Activated T-helper 2 cell treated with anti-CD3 and anti-CD28 coated beads, Interferon-gamma antibody, Interleukin-2, Interleukin-4, amounts not matched to agents 10 μg/mL and 5 μg/mL and 100 μg/mL, durations not matched to agents 14 hours and 24 hours and 36 hours (primary cell): ENCODE measurements at regions of chr9 and their contacts with region 1.

Region 1: DNA sequence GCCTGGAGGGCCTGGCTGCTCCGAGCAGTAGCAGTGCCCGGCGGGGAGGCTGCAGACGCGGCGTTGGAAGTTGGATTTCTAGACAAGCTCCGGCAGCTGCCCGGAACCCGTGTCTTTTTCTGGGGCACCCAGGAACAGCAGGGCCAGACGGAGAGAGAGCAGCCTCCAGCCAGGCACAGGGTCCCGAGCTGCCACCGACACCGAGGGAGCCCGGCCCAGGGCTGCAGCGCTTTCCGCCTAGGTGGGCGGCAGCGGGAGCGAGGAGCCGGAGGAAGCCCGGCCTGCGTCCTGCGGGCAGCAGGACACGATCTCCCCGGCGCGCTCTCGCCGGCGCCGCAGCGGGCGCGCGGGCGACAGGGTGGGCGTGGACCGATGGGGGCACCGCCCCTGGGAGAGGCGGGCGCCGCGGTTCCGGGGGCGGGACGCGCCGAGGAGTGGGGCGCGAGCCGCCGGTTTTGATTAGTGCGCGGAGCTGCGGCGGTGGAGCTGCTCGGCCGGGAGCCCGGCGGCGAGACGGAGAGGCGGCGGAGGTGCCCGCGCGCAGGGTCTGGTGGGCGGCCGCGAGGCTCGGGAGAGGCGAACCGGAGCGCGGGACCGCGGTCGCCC is at the start of gene UGCG:
- DNase-seq: peak; percentile 85
- H3K4me3 Mint-ChIP-seq: peak within 1 kb of the TSS; percentile 84
- H3K27ac Mint-ChIP-seq: peak within 1 kb of the TSS; percentile 83
- H3K4me1 Mint-ChIP-seq: peaks cover 9% of the 10 kb centered on the region
- H3K27me3 Mint-ChIP-seq: peaks cover 3% of the 10 kb centered on the region
- total RNA-seq, gene UGCG: 14.4 and 16.6 TPM in 2 replicates

Region 2: DNA sequence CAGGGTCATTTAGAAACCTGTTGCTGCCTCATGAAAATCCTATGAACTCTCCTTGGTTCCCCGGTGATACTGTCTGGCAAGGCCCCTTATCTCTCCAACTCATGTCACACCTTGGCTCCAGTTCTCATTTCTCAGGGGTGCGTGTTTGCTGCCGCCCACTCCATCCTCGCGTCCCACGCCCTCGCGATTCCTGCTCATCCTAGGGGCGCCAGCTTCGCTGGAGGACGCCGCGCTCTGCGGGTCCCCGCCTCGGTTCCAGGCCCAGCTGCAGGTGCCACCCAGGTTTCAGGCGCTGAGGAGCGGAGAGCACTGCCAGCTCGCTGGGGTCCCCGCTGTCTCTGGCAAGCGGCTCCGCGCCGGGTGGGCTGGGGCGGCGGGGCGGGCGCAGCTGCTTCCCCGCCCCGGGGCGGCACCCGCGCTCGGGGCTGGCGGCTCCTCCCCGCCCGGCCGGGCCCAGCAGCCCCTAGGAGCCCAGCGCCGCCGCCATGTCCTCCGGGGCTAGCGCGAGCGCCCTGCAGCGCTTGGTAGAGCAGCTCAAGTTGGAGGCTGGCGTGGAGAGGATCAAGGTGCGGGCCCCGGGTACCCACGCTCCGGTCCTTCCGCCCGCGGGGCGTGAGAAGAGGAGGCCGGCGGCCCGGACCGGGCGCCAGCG is 235.2 kb before region 1 on chr9 and contains the start of gene GNG10:
- intact Hi-C with region 1: loop called (anchors 5 kb)
- DNase-seq: peak; percentile 62
- H3K4me3 Mint-ChIP-seq: peak within 1 kb of the TSS; percentile 87
- H3K27ac Mint-ChIP-seq: peak within 1 kb of the TSS; percentile 83
- H3K4me1 Mint-ChIP-seq: peaks cover 19% of the 10 kb centered on the region
- H3K27me3 Mint-ChIP-seq: no peaks in the 10 kb centered on the region
- total RNA-seq, gene GNG10: 30.7 and 30.9 TPM in 2 replicates

Region 3: GRCh38 chr9:111870774-111871498 is 25.5 kb before region 1 on chr9:
- intact Hi-C with region 1: loop called (anchors 2 kb)
- DNase-seq: peak; percentile 11
- H3K4me3 Mint-ChIP-seq: no peak overlapping the region
- H3K27ac Mint-ChIP-seq: no peak overlapping the region
- H3K4me1 Mint-ChIP-seq: peaks cover 18% of the 10 kb centered on the region
- H3K27me3 Mint-ChIP-seq: peaks cover 50% of the 10 kb centered on the region

Region 4: GRCh38 chr9:111945216-111945615 is 48.8 kb after region 1 on chr9:
- intact Hi-C with region 1: loop called (anchors 5 kb)
- DNase-seq: no peak
- H3K4me3 Mint-ChIP-seq: no peak overlapping the region
- H3K27ac Mint-ChIP-seq: no peak overlapping the region
- H3K4me1 Mint-ChIP-seq: peaks cover 14% of the 10 kb centered on the region
- H3K27me3 Mint-ChIP-seq: peaks cover 7% of the 10 kb centered on the region

Region 5: DNA sequence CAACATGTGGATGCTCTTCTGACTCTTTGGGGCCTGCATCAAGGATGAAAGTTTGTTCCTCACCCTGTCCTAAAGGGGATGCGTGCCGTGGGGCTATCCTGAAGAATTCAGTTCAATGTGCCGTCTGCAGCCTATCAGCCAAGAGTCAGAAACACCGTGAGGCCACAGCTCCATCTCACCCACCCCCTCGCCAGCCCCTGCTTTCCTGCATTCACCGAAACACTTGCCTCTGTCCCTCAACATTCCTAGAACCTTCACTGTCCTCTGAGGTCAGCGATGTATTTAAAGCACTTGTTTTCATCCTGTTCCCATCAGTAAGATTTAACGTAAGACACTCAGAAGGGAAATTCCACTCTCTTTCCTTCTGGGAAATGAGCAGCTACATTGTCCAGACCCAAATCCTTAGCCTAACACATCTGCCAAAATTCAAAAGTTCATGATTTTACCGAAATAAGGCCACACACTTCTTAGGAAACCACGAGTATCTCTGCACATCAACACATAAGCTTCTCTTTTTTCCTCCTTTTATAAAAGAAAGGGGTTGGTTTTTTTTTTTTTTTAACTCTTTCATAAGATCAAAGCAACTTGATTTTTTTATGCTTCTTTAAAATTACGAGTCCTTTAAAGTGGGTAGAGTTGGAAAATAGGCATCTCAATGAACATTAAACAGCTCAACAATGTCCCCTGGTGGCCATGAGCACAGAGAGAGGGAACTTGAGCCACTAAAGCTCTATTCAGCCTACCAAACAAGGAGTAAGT is 178.0 kb after region 1 on chr9:
- intact Hi-C with region 1: loop called (anchors 5 kb)
- DNase-seq: peak; percentile 31
- H3K4me3 Mint-ChIP-seq: no peak overlapping the region
- H3K27ac Mint-ChIP-seq: no peak overlapping the region
- H3K4me1 Mint-ChIP-seq: peaks cover 9% of the 10 kb centered on the region
- H3K27me3 Mint-ChIP-seq: peaks cover 1% of the 10 kb centered on the region

Region 6: DNA sequence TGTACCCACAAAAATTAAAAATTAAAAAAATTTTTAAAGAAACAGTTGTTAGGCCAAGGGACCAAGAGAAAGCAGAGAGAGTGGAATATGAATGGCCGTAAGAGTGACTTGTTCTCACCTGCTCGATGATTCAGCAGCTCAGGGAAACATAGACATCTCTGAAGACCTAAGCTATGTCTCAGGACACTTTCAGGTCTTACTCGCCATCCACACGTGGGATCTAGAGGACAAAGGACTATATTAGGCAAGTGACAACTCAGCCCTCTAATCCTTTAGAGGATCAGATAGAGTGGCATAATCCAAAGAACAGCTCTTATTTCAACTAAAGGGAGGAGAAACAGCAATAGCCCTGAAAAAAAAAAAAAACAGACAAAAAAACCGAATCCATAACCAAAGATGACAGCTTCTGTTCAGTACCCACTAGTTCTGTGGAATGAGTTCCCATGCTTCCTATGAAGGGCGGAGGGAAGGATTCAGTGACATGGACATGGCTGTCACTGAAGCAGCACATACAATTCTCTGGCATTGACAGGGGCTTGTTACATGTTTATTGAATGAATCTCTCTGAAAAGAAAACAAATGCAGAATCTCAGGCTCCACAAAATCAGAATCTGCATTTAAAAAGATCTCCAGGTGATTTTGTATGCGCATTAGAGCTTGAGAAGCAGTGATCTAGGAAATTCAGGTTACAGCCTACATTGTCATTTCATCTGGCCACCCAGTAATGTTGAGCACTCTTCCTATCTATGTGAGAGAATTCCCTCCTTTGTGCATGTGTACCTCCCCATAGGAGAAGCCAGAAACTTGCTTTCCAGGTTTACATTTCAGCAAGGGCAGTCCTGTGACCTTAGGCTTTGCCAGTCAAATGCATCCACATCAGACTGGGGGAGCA is 686.2 kb after region 1 on chr9:
- intact Hi-C with region 1: no loop called
- DNase-seq: no peak
- H3K4me3 Mint-ChIP-seq: no peak overlapping the region
- H3K27ac Mint-ChIP-seq: no peak overlapping the region
- H3K4me1 Mint-ChIP-seq: no peaks in the 10 kb centered on the region
- H3K27me3 Mint-ChIP-seq: no peaks in the 10 kb centered on the region